ENCODE measurements at regions of chr7 and their contacts with region 1.

Region 1: DNA sequence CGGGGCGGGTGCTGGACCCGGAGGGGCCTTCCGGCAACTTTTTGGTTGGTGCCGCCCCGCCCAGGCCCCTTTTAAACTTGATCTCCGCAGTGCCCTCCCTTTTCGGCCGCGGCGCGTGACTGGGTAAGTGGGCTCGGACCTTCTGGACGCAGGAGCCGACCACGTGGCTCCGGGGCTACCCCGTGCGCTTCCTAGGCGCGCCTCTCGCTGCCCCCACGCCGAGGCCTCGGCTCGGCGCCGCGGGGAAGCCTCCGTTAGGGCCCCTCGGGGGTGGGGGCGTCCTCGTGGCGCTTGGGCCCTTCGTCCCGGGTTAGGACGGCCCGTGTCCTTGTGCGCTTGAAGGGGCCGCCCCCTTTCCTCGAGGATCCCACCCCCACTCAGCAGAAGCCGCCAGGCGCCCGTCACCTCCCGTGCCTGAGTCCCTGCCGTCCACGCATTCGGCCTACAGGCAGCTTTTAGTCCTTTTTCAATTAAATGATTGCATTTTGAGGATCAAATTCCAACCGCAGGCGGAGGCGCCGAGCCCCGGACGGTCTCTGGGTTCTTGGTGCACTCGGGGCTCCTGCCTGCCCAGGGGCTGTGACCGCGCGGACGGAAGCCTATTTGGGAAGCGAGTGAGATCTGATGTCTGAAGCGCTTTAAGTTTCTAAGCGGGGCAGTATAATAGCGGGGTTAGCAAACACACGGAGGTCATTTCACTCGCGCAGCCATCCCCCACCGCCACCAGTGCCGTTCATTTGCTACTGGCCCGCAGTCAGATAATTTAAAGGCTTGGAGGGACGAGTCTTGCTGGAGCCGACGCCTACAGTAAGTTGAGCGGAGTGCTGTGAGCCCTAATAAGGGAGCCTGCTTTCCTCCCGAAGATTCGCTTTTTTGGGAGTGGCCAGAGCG is 31.8 kb upstream of the TOMM7 start:
- DNase-seq: peak; percentile 95
- ATAC-seq: peak; percentile 76 to 84 (median 80)
- H3K4me3 ChIP-seq: peak overlapping the region; percentile 78
- H3K27ac ChIP-seq: peak overlapping the region; percentile 97
- H3K4me1 ChIP-seq: peaks cover 37% of the 10 kb centered on the region
- H3K27me3 ChIP-seq: no peaks in the 10 kb centered on the region
- CTCF ChIP-seq: peak; percentile 78

Region 2: GRCh38 chr7:22726345-22727185 is 127.8 kb before region 1 on chr7:
- intact Hi-C with region 1: loop called in 1 of 2 experiments (anchors 5 kb)
- DNase-seq: peak; percentile 35 to 72
- ATAC-seq: peak; percentile 74 to 89 (median 85)
- H3K4me3 ChIP-seq: peak overlapping the region; percentile 60
- H3K27ac ChIP-seq: peak overlapping the region; percentile 65
- H3K4me1 ChIP-seq: peaks cover 37% of the 10 kb centered on the region
- H3K27me3 ChIP-seq: no peaks in the 10 kb centered on the region
- CTCF ChIP-seq: peak; percentile 68

Region 3: DNA sequence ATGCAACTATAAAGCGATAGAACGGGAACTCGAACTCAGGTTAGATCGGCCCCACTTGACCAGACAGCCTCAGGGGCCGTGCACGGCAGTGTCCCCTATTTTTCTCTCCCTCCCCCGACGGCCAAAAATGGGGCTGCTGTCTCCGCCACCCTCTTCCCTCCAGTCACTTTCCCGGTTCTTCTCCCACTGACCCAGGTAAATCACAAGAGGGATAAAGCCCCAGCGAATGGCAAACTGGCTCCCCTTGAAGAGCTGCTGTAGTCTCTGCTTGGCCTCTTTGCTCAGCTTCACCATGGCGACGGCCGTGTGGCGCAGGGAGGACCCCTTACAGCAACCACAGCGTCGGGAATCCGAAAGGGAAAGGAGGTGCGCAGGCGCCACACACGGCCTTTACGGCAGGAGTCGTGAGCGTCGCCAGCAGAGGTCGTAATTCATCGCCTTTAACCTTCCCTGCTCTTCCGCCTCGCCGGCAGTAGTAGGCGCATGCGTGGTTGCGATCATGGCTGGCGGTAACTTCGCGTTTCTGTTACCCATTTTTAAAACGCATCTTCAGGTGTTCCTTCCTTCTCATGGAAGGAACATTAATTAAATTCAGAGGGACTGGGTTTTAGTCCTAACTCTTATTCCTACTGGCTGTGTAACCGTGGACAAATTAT is 31.8 kb before region 1 on chr7 and contains the start of gene TOMM7:
- intact Hi-C with region 1: loop called (anchors 5 kb)
- DNase-seq: peak; percentile 90 to 96
- ATAC-seq: peak; percentile 96 to 98 (median 98)
- H3K4me3 ChIP-seq: peak within 1 kb of the TSS; percentile 97
- H3K27ac ChIP-seq: peak within 1 kb of the TSS; percentile 92
- H3K4me1 ChIP-seq: peaks cover 20% of the 10 kb centered on the region
- H3K27me3 ChIP-seq: no peaks in the 10 kb centered on the region
- CTCF ChIP-seq: peak; percentile 55
- total RNA-seq, gene TOMM7: 465 to 704 (median 639) TPM

Region 4: GRCh38 chr7:23013715-23014649 is 159.6 kb after region 1 on chr7 and contains the start of gene HYCC1:
- intact Hi-C with region 1: loop called in 1 of 2 experiments (anchors 10 kb)
- DNase-seq: peak; percentile 98 to 99
- ATAC-seq: peak; percentile 99 to 100 (median 100)
- H3K4me3 ChIP-seq: peak within 1 kb of the TSS; percentile 85
- H3K27ac ChIP-seq: peak within 1 kb of the TSS; percentile 87
- H3K4me1 ChIP-seq: peaks cover 26% of the 10 kb centered on the region
- H3K27me3 ChIP-seq: no peaks in the 10 kb centered on the region
- CTCF ChIP-seq: peak; percentile 70
- total RNA-seq, gene HYCC1: 24.0 to 63.9 (median 50.5) TPM

Measured in psoas muscle (tissue), 8 donors.